Calu3 (cell line): ENCODE measurements at regions of chr14 and their contacts with region 1.

Region 1: GRCh38 chr14:47917345-47917954 is 242.0 kb upstream of the MDGA2 start:
- DNase-seq: peak; percentile 13
- H3K4me3 Mint-ChIP-seq: no peak overlapping the region
- H3K27ac Mint-ChIP-seq: no peak overlapping the region
- H3K4me1 Mint-ChIP-seq: no peaks in the 10 kb centered on the region
- H3K27me3 Mint-ChIP-seq: no peaks in the 10 kb centered on the region
- CTCF ChIP-seq: peak; percentile 8

Region 2: GRCh38 chr14:49173765-49174373 is 1256.4 kb after region 1 on chr14:
- CTCF ChIA-PET with region 1: interaction called, 4 read pairs
- intact Hi-C with region 1: loop called (anchors 1 kb)
- DNase-seq: peak; percentile 68
- H3K4me3 Mint-ChIP-seq: no peak overlapping the region
- H3K27ac Mint-ChIP-seq: no peak overlapping the region
- H3K4me1 Mint-ChIP-seq: no peaks in the 10 kb centered on the region
- H3K27me3 Mint-ChIP-seq: no peaks in the 10 kb centered on the region
- CTCF ChIP-seq: peak; percentile 41